Natural killer cell (primary cell): ENCODE measurements at regions of chr22 and their contacts with region 1.

Region 1: GRCh38 chr22:40679964-40680818 is 907 bp downstream of the MCHR1 start:
- DNase-seq: no peak
- ATAC-seq: no peak
- H3K4me3 ChIP-seq: no peak overlapping the region
- H3K4me3 Mint-ChIP-seq: no peak overlapping the region
- H3K27ac ChIP-seq: no peak overlapping the region
- H3K27ac Mint-ChIP-seq: no peak overlapping the region
- H3K4me1 ChIP-seq: peaks cover 5% of the 10 kb centered on the region
- H3K4me1 Mint-ChIP-seq: peaks cover 5 to 7% of the 10 kb centered on the region in 2 donors
- H3K27me3 ChIP-seq: peaks cover 6% of the 10 kb centered on the region
- H3K27me3 Mint-ChIP-seq: peaks cover 21 to 23% of the 10 kb centered on the region in 2 donors
- CTCF ChIP-seq: no peak

Region 2: GRCh38 chr22:40721266-40721665 is 41.1 kb after region 1 on chr22:
- intact Hi-C with region 1: no loop called
- DNase-seq: no peak
- ATAC-seq: peak in 1 of 3 donors; percentile 35
- H3K4me3 ChIP-seq: no peak overlapping the region
- H3K4me3 Mint-ChIP-seq: no peak overlapping the region
- H3K27ac ChIP-seq: no peak overlapping the region
- H3K27ac Mint-ChIP-seq: no peak overlapping the region
- H3K4me1 ChIP-seq: no peaks in the 10 kb centered on the region
- H3K4me1 Mint-ChIP-seq: no peaks in the 10 kb centered on the region
- H3K27me3 ChIP-seq: no peaks in the 10 kb centered on the region
- H3K27me3 Mint-ChIP-seq: peaks cover 6 to 7% of the 10 kb centered on the region in 2 donors
- CTCF ChIP-seq: no peak

Region 3: DNA sequence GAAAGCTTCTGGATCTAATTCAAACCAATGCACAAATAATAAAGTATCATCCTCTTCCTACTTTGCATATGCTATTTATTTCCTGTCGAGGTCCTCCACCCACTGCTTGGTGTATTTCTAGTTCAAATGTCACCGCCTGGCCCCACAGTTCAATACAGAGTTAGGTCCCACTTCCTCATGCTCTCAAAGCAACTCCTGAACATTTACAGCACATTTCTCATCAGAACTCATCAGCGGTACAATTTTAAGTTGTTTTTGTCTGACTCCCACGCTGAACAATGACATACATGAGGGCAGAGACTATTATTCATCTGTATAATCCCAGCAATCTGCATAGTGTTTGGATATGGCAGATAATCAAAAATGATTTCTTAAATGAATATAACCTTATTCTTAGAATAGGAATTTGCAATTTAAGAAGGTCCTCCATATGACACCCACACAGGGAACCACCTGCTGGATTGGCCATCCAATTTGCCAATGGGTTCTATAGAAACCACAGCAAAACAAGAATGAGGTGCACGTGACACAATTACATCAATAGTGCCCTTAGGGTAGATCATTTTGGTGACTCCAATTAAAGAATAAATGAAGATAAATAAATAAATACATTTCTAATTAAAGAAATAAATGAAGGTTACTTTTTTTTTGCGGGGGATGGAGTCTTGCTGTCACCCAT is 84.7 kb after region 1 on chr22:
- intact Hi-C with region 1: loop called (anchors 2 kb)
- DNase-seq: peak in 1 of 2 donors; percentile 48
- ATAC-seq: no peak
- H3K4me3 ChIP-seq: no peak overlapping the region
- H3K4me3 Mint-ChIP-seq: no peak overlapping the region
- H3K27ac ChIP-seq: peak overlapping the region; percentile 35
- H3K27ac Mint-ChIP-seq: no peak overlapping the region
- H3K4me1 ChIP-seq: no peaks in the 10 kb centered on the region
- H3K4me1 Mint-ChIP-seq: peaks cover 5 to 10% of the 10 kb centered on the region in 2 donors
- H3K27me3 ChIP-seq: no peaks in the 10 kb centered on the region
- H3K27me3 Mint-ChIP-seq: no peaks in the 10 kb centered on the region
- CTCF ChIP-seq: no peak

Region 4: DNA sequence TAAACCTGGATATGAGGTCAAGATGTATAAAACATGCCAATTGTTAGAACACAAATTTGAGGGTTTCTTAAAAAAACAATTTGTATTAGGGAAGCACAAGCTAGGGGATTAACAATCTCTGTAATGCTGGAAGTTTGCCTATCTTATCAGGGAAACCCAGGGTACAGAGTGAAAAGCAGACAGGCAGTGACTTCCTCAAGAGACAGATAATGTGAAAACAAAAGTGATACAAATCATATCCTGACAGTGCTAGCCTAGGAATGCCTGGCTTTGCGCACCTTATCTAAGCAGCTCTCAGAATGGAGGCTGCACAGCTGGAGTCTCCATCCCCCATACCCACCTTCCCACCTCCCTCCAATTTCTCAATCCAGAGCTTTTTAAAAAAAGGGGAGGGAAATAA is 248.5 kb after region 1 on chr22:
- intact Hi-C with region 1: no loop called
- DNase-seq: no peak
- ATAC-seq: no peak
- H3K4me3 ChIP-seq: no peak overlapping the region
- H3K4me3 Mint-ChIP-seq: no peak overlapping the region
- H3K27ac ChIP-seq: no peak overlapping the region
- H3K27ac Mint-ChIP-seq: no peak overlapping the region
- H3K4me1 ChIP-seq: no peaks in the 10 kb centered on the region
- H3K4me1 Mint-ChIP-seq: no peaks in the 10 kb centered on the region
- H3K27me3 ChIP-seq: no peaks in the 10 kb centered on the region
- H3K27me3 Mint-ChIP-seq: no peaks in the 10 kb centered on the region
- CTCF ChIP-seq: no peak